ENCODE measurements at regions of chr6 and their contacts with region 1.

Region 1: DNA sequence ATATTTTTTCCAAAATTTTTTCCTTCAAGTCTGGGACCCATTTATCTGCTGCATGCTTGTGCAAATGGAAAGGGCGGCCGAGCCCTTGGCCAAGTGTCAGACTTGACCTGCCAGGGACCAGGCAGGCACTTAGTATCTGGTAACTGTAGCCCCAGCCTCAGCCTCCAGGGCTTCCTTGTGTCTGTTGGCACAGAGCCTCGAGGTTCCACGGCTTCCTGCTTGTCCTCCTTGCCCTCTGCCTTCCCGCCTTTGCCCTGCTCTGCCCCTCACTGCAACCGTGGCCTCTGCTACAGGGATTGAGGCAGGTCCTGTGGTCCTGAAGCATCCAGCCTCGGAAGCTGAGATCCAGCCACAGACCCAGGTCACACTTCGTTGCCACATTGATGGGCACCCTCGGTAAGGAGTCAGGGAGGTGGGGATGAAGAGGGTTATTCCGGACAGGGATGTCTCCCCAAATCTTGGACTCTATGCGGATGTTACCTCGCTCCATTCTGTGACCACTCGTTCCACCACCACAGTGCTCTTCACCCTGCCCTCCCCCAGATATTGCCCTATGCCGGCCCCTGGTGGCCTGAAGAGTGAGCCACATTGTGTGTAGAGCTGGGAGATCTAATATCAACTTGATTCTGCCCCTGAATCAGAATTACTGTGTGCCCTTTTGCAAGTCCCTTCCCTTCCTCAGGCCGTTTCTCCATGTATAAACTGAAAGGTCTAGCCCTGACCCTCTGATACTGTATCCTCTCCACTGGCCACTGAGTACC is 41.5 kb upstream of the SRF start:
- DNase-seq: no peak
- ATAC-seq: peak; percentile 91
- H3K4me3 ChIP-seq: no peak overlapping the region
- H3K27ac ChIP-seq: peak overlapping the region; percentile 44
- H3K4me1 ChIP-seq: peaks cover 33% of the 10 kb centered on the region
- H3K27me3 ChIP-seq: no peaks in the 10 kb centered on the region
- CTCF ChIP-seq: no peak; the same call in 1 of the 2 replicates

Region 2: GRCh38 chr6:42637681-42638080 is 491.9 kb before region 1 on chr6:
- CTCF ChIA-PET with region 1: no interaction called
- POLR2A ChIA-PET with region 1: no interaction called
- in situ Hi-C with region 1: no loop called
- intact Hi-C with region 1: no loop called
- DNase-seq: no peak
- ATAC-seq: no peak
- H3K4me3 ChIP-seq: no peak overlapping the region
- H3K27ac ChIP-seq: no peak overlapping the region
- H3K4me1 ChIP-seq: no peaks in the 10 kb centered on the region
- H3K27me3 ChIP-seq: no peaks in the 10 kb centered on the region
- CTCF ChIP-seq: no peak

Region 3: GRCh38 chr6:42984001-42984923 is 145.4 kb before region 1 on chr6 and contains the start of gene PPP2R5D:
- CTCF ChIA-PET with region 1: no interaction called
- POLR2A ChIA-PET with region 1: no interaction called
- in situ Hi-C with region 1: no loop called
- intact Hi-C with region 1: no loop called
- DNase-seq: peak; percentile 93
- ATAC-seq: peak; percentile 97
- H3K4me3 ChIP-seq: peak within 1 kb of the TSS; percentile 66 to 75
- H3K27ac ChIP-seq: peak within 1 kb of the TSS; percentile 95
- H3K4me1 ChIP-seq: peaks cover 10% of the 10 kb centered on the region; the same call in 1 of the 2 replicates
- H3K27me3 ChIP-seq: no peaks in the 10 kb centered on the region
- CTCF ChIP-seq: no peak
- total RNA-seq, gene PPP2R5D: 63.6 TPM

Region 4: DNA sequence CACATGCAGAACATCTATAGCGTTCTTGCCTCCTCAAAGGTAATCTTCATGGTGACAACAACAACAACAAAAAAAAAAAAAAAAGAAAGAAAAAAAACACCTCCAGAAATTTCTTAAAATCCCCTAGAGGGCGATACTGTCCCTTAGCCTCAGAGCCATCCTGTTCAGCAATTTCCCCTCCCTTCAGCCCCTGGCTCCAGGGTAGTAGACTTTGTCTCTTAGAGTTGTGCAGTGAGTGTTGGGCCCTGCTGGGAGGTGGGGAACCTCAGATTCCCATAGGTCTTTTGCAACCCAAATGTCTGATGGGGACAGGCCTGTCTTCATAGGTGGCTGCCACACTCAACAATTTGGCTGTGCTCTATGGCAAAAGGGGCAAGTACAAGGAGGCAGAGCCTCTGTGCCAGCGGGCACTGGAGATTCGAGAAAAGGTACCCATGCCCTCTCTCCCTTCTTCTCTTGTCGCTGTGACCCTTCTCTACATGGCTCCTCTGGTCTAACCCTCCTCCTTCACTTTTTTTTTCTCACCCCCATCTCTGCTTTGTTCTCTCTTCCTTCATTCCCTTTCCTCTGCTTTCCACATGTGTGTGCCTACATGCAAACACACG is 59.5 kb before region 1 on chr6:
- CTCF ChIA-PET with region 1: interaction called, 4 read pairs
- POLR2A ChIA-PET with region 1: no interaction called
- in situ Hi-C with region 1: no loop called
- intact Hi-C with region 1: loop called (anchors 5 kb)
- DNase-seq: no peak
- ATAC-seq: peak; percentile 77
- H3K4me3 ChIP-seq: no peak overlapping the region
- H3K27ac ChIP-seq: peak overlapping the region; percentile 73
- H3K4me1 ChIP-seq: peaks cover 4% of the 10 kb centered on the region
- H3K27me3 ChIP-seq: no peaks in the 10 kb centered on the region
- CTCF ChIP-seq: peak; percentile 86

Region 5: DNA sequence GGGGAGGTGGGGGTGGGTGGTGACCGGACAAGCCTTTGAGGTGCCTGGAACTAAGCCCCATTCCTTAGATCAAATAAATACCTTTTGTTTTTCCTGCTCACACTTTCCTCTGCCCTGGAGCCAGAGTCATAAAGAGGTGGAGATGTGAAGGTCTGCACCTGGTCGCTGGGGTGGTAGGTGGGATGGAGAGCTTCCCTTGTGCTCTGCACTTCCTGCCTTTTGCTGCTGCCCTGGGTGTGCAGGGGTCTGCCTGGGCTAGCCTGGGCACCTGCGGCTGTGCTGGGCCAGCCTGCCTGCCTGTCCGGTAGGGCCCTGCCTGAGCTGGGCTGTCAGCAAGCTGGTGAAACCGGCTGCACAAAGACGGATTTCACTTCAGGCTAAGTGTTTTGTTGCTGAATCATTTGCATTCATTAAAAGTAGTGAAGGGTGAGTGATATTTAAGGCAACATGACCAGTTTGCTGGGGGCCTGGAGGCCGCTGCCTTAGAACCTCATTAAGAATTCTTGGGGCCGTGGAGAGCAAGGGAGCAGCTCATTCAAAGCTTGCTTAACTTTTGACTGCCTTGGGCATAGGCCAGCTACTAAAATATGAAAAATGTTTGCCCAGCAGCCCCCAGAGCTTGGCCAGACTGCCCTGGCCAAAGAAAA is 33.0 kb before region 1 on chr6:
- CTCF ChIA-PET with region 1: no interaction called
- POLR2A ChIA-PET with region 1: interaction called, 3 read pairs
- in situ Hi-C with region 1: no loop called
- intact Hi-C with region 1: loop called (anchors 5 kb)
- DNase-seq: no peak
- ATAC-seq: peak; percentile 60
- H3K4me3 ChIP-seq: peak overlapping the region; percentile 17 to 38
- H3K27ac ChIP-seq: peak overlapping the region; percentile 97
- H3K4me1 ChIP-seq: peaks cover 68% of the 10 kb centered on the region
- H3K27me3 ChIP-seq: no peaks in the 10 kb centered on the region
- CTCF ChIP-seq: no peak

Region 6: GRCh38 chr6:43221046-43221972 is 91.7 kb after region 1 on chr6:
- CTCF ChIA-PET with region 1: no interaction called
- POLR2A ChIA-PET with region 1: no interaction called
- in situ Hi-C with region 1: no loop called
- intact Hi-C with region 1: no loop called
- DNase-seq: no peak
- ATAC-seq: 0 out of 2 replicates have a peak, but pooled peaks have one; percentile 11
- H3K4me3 ChIP-seq: no peak overlapping the region
- H3K27ac ChIP-seq: no peak overlapping the region
- H3K4me1 ChIP-seq: peaks cover 5% of the 10 kb centered on the region; the same call in 1 of the 2 replicates
- H3K27me3 ChIP-seq: no peaks in the 10 kb centered on the region
- CTCF ChIP-seq: no peak

Measured in Panc1 (cell line).